ENCODE measurements at regions of chr12 and their contacts with region 1.

Region 1: DNA sequence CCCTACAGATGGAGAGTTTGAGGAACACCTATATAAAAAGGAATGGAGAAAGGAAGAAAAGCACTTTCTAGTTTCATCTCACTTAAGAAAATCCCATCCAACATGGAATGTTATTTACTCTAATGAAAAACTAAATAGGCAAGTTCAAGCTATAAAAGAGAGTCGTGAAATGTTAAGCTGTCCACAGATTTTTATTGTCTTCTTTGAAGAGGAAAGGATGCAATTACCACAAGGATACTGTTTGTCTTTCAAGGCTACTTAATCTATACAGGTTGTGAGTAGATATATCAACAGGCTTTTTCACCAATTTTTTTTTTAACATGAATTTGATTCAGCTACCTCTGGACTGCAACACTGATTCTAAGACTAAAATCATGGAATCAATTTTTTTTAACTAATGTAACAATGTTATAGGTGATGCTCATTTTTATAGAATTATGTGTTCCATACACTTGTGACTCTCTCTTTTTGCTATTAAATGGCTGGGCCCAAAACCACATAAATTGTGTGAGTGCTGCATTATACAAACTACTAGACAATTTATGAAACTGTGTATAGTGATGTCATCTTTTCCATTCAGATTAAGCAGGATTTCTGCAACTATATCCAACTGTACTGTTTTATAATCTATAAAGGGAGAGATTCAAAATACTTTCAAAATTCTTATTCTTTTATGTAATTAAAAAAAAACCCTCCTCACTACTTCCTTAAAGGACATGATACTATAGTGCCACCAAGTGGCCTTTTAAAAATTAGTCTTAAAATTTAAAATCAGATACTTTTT is 26.8 kb upstream of the BMAL2 start:
- DNase-seq: peak in 1 of 2 experiments; percentile 63
- H3K4me3 ChIP-seq: no peak overlapping the region
- H3K4me1 ChIP-seq: peaks cover 8% of the 10 kb centered on the region
- H3K27me3 ChIP-seq: no peaks in the 10 kb centered on the region

Region 2: GRCh38 chr12:27048822-27049752 is 256.8 kb before region 1 on chr12:
- in situ Hi-C with region 1: loop called (anchors 25 kb)
- DNase-seq: no peak
- H3K4me3 ChIP-seq: no peak overlapping the region
- H3K4me1 ChIP-seq: peaks cover 11% of the 10 kb centered on the region
- H3K27me3 ChIP-seq: no peaks in the 10 kb centered on the region

Region 3: DNA sequence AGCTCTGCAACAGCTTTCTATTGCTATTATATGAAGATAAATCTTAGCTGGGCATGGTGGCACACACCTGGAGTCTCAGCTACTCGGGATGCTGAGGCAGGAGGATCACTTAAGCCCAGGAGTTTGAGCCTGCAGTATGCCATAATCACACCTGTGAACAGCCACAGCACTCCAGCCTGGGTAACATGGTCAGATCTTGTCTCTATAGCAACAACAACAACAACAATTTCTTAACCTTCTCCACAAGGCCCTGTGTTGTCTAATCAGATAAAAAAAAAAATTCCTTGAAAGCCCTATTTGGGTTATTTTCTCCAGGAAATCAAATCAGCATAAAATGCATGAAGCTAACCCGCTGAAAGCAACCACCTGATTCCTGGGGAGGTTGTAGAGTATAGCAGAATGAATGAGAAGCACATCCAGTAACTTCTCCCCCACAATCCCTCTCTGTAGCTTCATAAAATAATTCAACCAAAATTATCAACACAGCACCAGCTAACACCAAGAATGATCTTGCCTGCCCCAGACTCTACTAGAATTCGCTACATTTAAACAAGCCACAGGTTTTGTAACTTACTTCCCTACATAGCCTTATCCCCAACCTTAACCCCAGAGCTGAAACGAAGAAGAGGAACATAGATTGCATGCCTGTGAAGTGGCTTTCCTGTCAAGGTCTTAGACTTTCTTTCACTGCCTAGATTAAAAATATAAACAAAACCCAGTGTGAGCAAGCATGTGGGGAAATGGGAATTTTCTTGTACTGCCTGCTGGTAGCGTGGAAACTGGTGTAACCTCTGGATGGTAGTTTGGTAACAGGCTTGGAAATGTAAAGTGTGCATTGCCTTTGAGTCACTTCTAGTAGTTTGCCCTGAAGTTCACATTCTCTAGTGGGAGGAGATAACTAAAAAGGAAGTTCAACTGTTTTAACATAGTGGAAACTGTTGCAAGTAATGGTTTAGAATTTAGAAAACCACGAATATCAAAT is 67.8 kb before region 1 on chr12:
- in situ Hi-C with region 1: no loop called
- DNase-seq: no peak
- H3K4me3 ChIP-seq: no peak overlapping the region
- H3K4me1 ChIP-seq: no peaks in the 10 kb centered on the region
- H3K27me3 ChIP-seq: no peaks in the 10 kb centered on the region

Region 4: DNA sequence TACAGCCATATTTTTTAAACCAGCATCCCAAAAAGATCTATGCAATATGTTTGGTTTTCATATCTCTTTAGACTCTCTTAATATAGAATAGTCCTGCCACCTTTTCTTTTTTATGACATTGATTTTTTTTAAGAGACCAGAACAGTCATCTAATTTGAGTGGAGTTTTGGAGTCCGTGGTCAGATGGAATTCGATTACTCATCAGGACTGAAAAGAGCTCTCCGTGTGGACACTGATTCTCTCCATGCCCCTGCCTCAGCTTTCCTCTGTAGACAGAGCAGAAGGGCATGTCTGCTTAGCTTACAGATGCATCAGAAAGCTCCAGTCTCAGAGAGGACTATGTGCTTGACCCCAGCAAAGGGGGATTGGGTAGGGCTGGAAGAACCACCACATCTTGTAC is 168.5 kb after region 1 on chr12:
- in situ Hi-C with region 1: no loop called
- DNase-seq: no peak
- H3K4me3 ChIP-seq: no peak overlapping the region
- H3K4me1 ChIP-seq: no peaks in the 10 kb centered on the region
- H3K27me3 ChIP-seq: no peaks in the 10 kb centered on the region